T-cell (primary cell): ENCODE measurements at regions of chr11 and their contacts with region 1.

Region 1: DNA sequence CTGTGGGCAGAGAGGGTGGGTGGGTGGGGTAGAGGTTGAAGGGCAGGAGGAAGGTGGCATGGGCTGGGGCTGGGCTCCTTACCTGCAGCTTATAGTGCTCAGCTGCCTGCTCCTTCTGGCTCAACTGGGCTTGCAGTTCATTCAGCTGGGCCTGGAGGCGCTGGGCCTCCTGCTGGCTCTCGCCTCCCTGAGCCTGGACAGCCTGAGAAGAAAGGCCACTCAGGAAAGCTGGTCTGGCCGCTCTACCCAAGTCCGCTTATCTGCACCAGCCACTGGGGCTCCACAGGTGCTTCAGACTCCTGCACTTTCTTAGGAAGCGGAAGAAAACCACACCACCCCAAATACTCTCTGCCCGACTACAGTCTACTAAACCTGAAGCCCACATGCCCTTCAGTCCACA is 10.5 kb downstream of the IL18BP start:
- DNase-seq: no peak
- ATAC-seq: no peak
- H3K4me3 ChIP-seq: no peak overlapping the region
- H3K4me3 Mint-ChIP-seq: no peak overlapping the region
- H3K27ac ChIP-seq: no peak overlapping the region
- H3K27ac Mint-ChIP-seq: peak overlapping the region in 1 of 2 donors; percentile 66
- H3K4me1 ChIP-seq: peaks cover 0 to 4% of the 10 kb centered on the region in 2 experiments
- H3K4me1 Mint-ChIP-seq: peaks cover 0 to 6% (median 2%) of the 10 kb centered on the region in 3 donors
- H3K27me3 ChIP-seq: no peaks in the 10 kb centered on the region
- H3K27me3 Mint-ChIP-seq: no peaks in the 10 kb centered on the region

Region 2: GRCh38 chr11:72058416-72059034 is 49.3 kb after region 1 on chr11:
- CTCF ChIA-PET with region 1: no interaction called
- POLR2A ChIA-PET with region 1: interaction called, 3 to 12 read pairs
- DNase-seq: no peak
- ATAC-seq: no peak
- H3K4me3 ChIP-seq: no peak overlapping the region
- H3K4me3 Mint-ChIP-seq: no peak overlapping the region
- H3K27ac ChIP-seq: no peak overlapping the region
- H3K27ac Mint-ChIP-seq: no peak overlapping the region
- H3K4me1 ChIP-seq: no peaks in the 10 kb centered on the region
- H3K4me1 Mint-ChIP-seq: peaks cover 0 to 6% (median 0%) of the 10 kb centered on the region in 3 donors
- H3K27me3 ChIP-seq: no peaks in the 10 kb centered on the region
- H3K27me3 Mint-ChIP-seq: no peaks in the 10 kb centered on the region